Activated T-helper 1 cell treated with anti-CD3 and anti-CD28 coated beads, Interleukin-12 subunit alpha, Interleukin-12 subunit beta, Interleukin-2, Interleukin-4 antibody, amounts not matched to agents 30 ng/mL and 10 ng/mL and 1 ng/mL, durations not matched to agents 14 hours and 24 hours and 36 hours (primary cell): ENCODE measurements at regions of chr2 and their contacts with region 1.

Region 1: DNA sequence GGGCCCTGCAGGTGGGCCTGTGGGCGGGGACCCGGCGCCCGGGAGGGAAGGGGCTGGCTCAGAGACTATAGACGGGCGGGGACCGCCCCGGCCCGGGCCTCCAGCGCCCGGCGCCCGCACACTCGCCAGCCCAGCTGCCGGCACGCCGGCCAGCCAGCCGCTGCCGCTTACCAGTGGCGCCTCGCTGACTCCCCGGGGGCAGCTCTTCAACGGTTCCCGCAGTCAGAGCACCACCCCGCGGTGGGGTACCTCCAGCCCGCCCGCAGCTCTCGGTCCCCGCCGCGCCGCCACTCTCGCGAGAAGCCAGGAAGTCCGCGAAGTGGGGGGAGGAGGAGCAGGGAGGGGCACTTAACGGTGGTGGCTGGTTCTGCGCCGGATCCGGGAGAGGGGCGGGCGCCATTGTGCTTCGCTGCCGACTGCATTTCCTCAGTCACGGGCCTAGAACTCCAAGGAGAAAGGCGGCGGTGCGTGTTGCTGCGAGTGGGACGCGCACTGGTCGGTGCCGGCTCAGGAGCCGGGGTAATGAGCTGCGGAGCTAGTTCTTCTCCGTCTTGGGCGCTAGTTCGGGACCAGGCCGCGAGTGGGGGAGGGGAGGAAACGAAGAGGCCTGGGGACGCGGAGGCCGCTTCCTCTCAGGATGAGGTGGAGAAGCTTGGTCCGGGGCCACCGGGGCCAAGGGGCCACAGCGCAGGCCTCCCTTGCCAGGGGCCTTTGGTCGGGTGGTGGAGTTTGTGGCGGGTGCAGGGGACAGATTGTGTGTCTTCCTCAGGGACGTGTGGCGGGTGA is at the start of gene MARCHF7:
- DNase-seq: peak; percentile 96
- H3K4me3 Mint-ChIP-seq: peak within 1 kb of the TSS; percentile 98
- H3K27ac Mint-ChIP-seq: peak within 1 kb of the TSS; percentile 98
- H3K4me1 Mint-ChIP-seq: peaks cover 44% of the 10 kb centered on the region
- H3K27me3 Mint-ChIP-seq: no peaks in the 10 kb centered on the region
- total RNA-seq, gene MARCHF7: 76.5 and 80.3 TPM in 2 replicates

Region 2: GRCh38 chr2:159516241-159516766 is 196.0 kb before region 1 on chr2:
- intact Hi-C with region 1: loop called (anchors 5 kb)
- DNase-seq: no peak
- H3K4me3 Mint-ChIP-seq: peak overlapping the region; percentile 73
- H3K27ac Mint-ChIP-seq: peak overlapping the region; percentile 24
- H3K4me1 Mint-ChIP-seq: peaks cover 8% of the 10 kb centered on the region
- H3K27me3 Mint-ChIP-seq: peaks cover 5% of the 10 kb centered on the region

Region 3: DNA sequence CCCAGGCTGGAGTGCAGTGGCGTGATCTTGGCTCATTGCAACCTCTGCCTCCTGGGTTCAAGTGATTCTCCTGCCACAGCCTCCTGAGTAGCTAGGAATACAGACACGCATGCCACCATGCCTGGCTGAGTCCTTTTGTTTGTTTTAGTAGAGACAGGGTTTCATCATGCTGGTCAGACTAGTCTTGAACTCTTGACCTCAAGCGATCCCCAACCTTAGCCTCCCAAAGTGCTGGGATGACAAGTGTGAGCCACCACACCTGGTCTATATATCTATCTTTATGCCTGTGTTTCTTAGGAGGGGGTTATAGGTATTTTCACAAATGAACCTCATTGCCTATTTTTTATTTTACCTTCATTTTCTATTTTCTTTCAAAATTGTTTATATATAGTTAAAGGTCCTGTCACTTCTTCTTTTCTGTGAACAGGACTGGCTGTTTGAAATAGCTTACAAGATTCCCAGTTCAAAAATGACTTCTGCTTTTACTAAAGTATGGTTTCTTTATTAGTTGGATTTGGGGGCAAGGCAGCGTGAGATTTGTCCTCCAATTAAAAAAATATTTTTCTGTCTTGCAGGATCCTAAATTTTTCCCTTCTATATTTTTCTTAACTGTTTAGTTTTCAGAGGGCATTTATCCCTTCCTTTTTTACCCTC is 16.4 kb before region 1 on chr2:
- intact Hi-C with region 1: no loop called
- DNase-seq: no peak
- H3K4me3 Mint-ChIP-seq: no peak overlapping the region
- H3K27ac Mint-ChIP-seq: no peak overlapping the region
- H3K4me1 Mint-ChIP-seq: no peaks in the 10 kb centered on the region
- H3K27me3 Mint-ChIP-seq: no peaks in the 10 kb centered on the region

Region 4: DNA sequence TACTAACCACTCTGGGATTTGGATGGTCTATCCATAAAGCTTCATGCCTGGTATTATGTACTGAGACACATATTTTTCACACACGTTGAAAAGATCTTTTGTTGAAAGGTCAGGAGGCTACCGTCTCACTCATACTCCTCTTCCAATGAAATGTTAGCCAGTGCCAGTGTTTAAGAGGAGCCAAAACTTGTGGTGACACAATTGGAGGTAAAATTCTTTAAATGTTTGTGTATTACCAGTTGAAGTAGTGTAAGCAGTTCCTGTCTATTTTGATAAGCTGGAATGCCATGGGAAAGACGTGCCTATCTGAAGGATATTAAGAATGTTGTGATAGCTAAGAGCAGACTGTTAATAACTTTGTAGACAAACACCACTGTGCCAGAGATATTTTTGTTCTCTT is 32.0 kb after region 1 on chr2:
- intact Hi-C with region 1: loop called (anchors 2 kb)
- DNase-seq: no peak
- H3K4me3 Mint-ChIP-seq: no peak overlapping the region
- H3K27ac Mint-ChIP-seq: no peak overlapping the region
- H3K4me1 Mint-ChIP-seq: peaks cover 15% of the 10 kb centered on the region
- H3K27me3 Mint-ChIP-seq: no peaks in the 10 kb centered on the region

Region 5: DNA sequence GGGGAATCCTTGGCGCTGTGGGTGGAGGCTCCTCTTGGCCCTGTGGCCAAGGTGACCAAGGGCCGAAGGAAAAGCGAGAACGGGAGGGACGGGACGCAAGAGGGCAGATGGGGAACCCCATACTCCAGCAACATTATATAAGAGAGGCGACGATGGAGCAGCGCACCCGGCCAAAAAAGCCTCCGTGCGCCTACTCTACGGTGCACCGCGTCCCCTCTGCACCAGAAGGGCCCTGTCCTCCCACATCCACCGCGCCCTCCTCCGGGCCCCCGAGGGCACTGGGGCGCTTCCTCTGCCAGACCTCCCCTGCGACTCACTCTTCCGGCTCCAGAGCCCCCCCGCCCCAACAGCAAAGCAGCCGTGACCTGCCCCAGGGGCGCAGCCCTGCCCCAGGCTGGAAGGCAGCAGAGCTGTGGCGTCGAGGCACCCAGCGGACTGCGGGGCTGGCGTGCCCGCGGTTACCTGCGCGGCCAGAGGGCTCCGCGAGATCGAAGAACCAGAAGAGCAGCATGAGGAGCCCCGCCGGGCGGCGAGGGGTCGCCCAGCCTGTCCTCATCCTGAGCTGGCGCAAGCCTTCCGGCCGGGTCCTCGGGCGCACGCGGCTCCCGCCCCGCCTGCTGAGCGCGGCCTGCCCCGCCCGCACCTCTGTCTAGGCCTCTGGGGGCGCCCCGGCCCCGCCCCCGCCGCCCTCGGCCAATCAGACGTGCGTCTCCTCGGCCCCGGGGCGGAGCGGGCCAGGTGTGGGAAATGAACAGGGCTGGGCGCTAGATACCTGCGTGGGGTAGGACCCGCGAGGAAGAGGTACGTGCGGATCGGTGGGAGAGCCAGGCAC is 192.0 kb after region 1 on chr2:
- intact Hi-C with region 1: loop called (anchors 2 kb)
- DNase-seq: peak; percentile 69
- H3K4me3 Mint-ChIP-seq: peak within 1 kb of the TSS; percentile 92
- H3K27ac Mint-ChIP-seq: peak within 1 kb of the TSS; percentile 91
- H3K4me1 Mint-ChIP-seq: peaks cover 41% of the 10 kb centered on the region
- H3K27me3 Mint-ChIP-seq: no peaks in the 10 kb centered on the region

Region 6: DNA sequence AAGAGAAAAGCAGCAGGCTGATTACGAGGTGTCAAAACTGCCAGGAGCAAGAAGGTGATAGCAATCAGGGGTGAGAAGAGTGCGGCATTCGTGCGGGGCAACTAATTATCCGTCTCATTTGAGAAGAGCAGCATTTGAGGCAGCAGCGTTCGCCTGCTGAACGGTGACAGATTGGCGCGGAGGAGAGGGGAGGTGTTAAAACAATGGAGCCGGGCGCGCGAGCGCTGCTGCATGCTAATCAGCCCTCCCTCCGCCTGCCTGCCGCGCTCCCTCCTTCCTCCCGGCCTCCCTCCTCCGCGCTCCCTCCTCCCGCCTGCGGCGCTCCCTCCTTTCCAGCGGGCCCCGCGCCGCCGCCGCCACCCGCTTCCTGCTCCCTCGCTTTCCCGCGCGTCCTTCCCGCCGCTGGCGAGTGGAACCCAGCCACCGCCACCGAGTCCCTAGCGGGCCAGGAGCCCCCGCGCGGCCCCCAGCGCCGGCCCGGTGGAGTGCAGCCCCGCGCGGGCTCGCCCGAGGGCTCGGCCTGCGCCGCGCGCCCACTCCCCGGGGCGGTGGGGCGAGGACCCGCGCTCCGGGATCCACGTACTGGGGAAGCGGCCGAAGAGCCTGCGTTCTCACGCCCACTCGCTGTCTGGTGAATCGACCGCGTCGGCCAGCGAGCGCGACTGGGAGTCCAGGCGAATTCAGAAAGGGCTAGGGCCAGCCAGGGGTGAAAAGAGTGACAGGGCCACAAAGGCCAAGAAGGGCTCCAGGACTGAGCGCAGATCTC is 1526.4 kb after region 1 on chr2:
- intact Hi-C with region 1: loop called (anchors 10 kb)
- DNase-seq: peak; percentile 47
- H3K4me3 Mint-ChIP-seq: peak overlapping the region; percentile 83
- H3K27ac Mint-ChIP-seq: peak overlapping the region; percentile 73
- H3K4me1 Mint-ChIP-seq: peaks cover 58% of the 10 kb centered on the region
- H3K27me3 Mint-ChIP-seq: no peaks in the 10 kb centered on the region